ENCODE measurements at regions of chr22 and their contacts with region 1.

Region 1: GRCh38 chr22:24175160-24175808 is 6.0 kb upstream of the SUSD2 start:
- DNase-seq: peak; percentile 78 to 85
- H3K4me3 ChIP-seq: no peak overlapping the region
- H3K4me3 Mint-ChIP-seq: no peak overlapping the region
- H3K27ac Mint-ChIP-seq: no peak overlapping the region
- H3K4me1 ChIP-seq: no peaks in the 10 kb centered on the region
- H3K4me1 Mint-ChIP-seq: no peaks in the 10 kb centered on the region
- H3K27me3 ChIP-seq: no peaks in the 10 kb centered on the region
- H3K27me3 Mint-ChIP-seq: no peaks in the 10 kb centered on the region
- CTCF ChIP-seq: peak; percentile 87 to 88

Region 2: GRCh38 chr22:23984430-23984829 is 190.9 kb before region 1 on chr22:
- CTCF ChIA-PET with region 1: interaction called, 3 read pairs
- POLR2A ChIA-PET with region 1: no interaction called
- intact Hi-C with region 1: loop called (anchors 5 kb)
- DNase-seq: peak; percentile 53 to 67
- H3K4me3 ChIP-seq: no peak overlapping the region
- H3K4me3 Mint-ChIP-seq: no peak overlapping the region
- H3K27ac Mint-ChIP-seq: no peak overlapping the region
- H3K4me1 ChIP-seq: no peaks in the 10 kb centered on the region
- H3K4me1 Mint-ChIP-seq: no peaks in the 10 kb centered on the region
- H3K27me3 ChIP-seq: no peaks in the 10 kb centered on the region
- H3K27me3 Mint-ChIP-seq: no peaks in the 10 kb centered on the region
- CTCF ChIP-seq: peak; percentile 65 to 80

Region 3: DNA sequence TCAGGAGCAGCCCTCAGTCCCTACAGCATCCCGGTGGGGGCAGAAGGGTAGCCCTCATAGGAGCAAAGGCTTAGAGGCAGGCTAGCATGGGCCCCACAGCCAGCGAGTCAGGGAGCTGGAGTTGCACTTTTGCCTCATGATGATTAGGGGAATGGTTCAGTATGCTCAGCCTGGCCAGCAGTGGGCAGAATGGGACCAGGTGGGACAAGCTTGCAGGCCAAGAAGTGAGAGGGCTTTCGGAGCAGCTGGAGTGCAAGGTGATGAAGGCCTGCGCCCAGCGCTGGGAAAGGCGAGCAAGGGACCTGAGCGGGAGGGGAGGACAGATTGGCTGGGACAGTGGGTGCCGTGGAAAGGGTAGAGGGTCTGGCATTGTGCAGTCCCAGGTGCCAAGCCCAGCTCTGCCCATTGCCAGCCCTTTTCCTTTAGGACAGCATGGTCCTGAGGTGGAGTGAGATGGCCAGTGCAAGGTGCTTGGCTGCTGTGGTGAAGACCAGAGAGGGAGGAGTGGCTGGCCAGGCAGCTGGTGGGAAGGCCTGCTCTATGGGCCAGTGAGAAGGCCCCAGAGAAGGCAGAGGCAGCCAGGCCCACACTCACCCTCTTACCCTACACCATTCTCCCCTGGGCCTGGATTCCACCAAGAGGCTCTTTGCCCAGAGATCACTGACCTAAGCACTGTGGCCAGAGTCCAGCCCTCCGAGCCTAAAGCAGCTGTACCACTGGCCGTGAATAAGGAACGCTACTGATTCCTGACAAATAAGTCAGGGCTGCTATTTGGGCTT is 41.9 kb before region 1 on chr22:
- CTCF ChIA-PET with region 1: interaction called, 19 read pairs
- POLR2A ChIA-PET with region 1: no interaction called
- intact Hi-C with region 1: loop called (anchors 1 kb)
- DNase-seq: peak in 1 of 2 experiments; percentile 38
- H3K4me3 ChIP-seq: no peak overlapping the region
- H3K4me3 Mint-ChIP-seq: no peak overlapping the region
- H3K27ac Mint-ChIP-seq: no peak overlapping the region
- H3K4me1 ChIP-seq: no peaks in the 10 kb centered on the region
- H3K4me1 Mint-ChIP-seq: no peaks in the 10 kb centered on the region
- H3K27me3 ChIP-seq: no peaks in the 10 kb centered on the region
- H3K27me3 Mint-ChIP-seq: no peaks in the 10 kb centered on the region
- CTCF ChIP-seq: peak in 1 of 2 experiments; percentile 58

Region 4: GRCh38 chr22:24236656-24237055 is 61.4 kb after region 1 on chr22:
- CTCF ChIA-PET with region 1: no interaction called
- POLR2A ChIA-PET with region 1: no interaction called
- intact Hi-C with region 1: no loop called
- DNase-seq: no peak
- H3K4me3 ChIP-seq: no peak overlapping the region
- H3K4me3 Mint-ChIP-seq: no peak overlapping the region
- H3K27ac Mint-ChIP-seq: no peak overlapping the region
- H3K4me1 ChIP-seq: no peaks in the 10 kb centered on the region
- H3K4me1 Mint-ChIP-seq: no peaks in the 10 kb centered on the region
- H3K27me3 ChIP-seq: no peaks in the 10 kb centered on the region
- H3K27me3 Mint-ChIP-seq: no peaks in the 10 kb centered on the region
- CTCF ChIP-seq: no peak

Measured in Caco-2 (cell line).